IMR-90 (cell line): ENCODE measurements at regions of chr15 and their contacts with region 1.

Region 1: DNA sequence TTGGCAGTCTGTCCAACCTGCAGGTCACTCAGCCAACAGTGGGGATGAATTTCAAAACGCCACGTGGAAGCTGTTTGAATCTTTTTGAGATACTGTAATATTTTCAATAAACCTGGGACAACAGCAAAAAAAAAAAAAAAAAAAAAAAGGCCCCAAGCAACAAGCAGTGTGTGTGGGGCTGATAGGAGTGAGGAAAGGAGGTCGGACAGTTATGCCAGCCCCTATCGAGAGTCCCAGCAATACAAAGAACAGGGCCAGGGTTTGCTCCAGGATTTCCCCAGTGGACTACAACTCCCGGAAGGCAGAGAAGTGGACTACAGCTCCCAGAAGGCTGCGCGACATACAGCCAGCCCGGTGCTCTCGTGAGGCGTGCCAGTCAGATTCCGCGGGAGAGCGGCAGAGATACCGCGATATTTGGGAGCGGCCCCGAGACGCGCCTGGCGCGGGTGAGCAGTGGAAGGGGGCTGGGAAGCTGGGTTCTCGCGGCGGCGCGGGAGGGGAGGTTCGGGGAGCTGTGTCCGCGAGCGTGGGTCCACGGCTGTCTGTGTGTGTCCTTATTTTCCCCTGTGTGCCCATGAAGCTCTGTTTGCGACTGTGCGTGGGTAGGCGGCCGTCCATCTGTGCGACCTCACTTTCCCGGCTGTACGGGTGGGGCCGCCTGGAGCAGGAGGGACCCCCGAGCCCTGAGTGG is at the start of gene PPCDC:
- DNase-seq: peak; percentile 92
- ATAC-seq: peak; percentile 100
- H3K4me3 ChIP-seq: peak within 1 kb of the TSS; percentile 64
- H3K27ac ChIP-seq: peak within 1 kb of the TSS; percentile 75
- H3K4me1 ChIP-seq: peaks cover 2% of the 10 kb centered on the region; the same call in 1 of the 2 replicates
- H3K27me3 ChIP-seq: peaks cover 1% of the 10 kb centered on the region; the same call in 1 of the 2 replicates
- CTCF ChIP-seq: no peak
- POLR2A ChIP-seq: peak; percentile 84
- RAD21 ChIP-seq: no peak
- total RNA-seq, gene PPCDC: 5.6 and 13.3 TPM in 2 replicates

Region 2: GRCh38 chr15:74787251-74788041 is 235.9 kb before region 1 on chr15:
- CTCF ChIA-PET with region 1: no interaction called
- POLR2A ChIA-PET with region 1: interaction called, 17 read pairs
- dilution Hi-C with region 1: no loop called
- in situ Hi-C with region 1: no loop called
- intact Hi-C with region 1: no loop called
- DNase-seq: peak; percentile 71
- ATAC-seq: peak; percentile 59
- H3K4me3 ChIP-seq: no peak overlapping the region
- H3K27ac ChIP-seq: no peak overlapping the region
- H3K4me1 ChIP-seq: peaks cover 35% of the 10 kb centered on the region
- H3K27me3 ChIP-seq: no peaks in the 10 kb centered on the region
- CTCF ChIP-seq: peak; percentile 66
- POLR2A ChIP-seq: no peak
- RAD21 ChIP-seq: no peak